Activated naive CD4-positive, alpha-beta T cell treated with anti-CD3 and anti-CD28 coated beads, Interleukin-2, amount 10 ng/mL, durations not matched to agents 7 days and 5 days (primary cell): ENCODE measurements at regions of chr19 and their contacts with region 1.

Region 1: GRCh38 chr19:39970675-39971379 is at the start of gene PSMC4:
- DNase-seq: peak; percentile 99
- H3K4me3 Mint-ChIP-seq: peak within 1 kb of the TSS; percentile 97
- H3K27ac Mint-ChIP-seq: peak within 1 kb of the TSS; percentile 96
- H3K4me1 Mint-ChIP-seq: peaks cover 50% of the 10 kb centered on the region
- H3K27me3 Mint-ChIP-seq: no peaks in the 10 kb centered on the region

Region 2: DNA sequence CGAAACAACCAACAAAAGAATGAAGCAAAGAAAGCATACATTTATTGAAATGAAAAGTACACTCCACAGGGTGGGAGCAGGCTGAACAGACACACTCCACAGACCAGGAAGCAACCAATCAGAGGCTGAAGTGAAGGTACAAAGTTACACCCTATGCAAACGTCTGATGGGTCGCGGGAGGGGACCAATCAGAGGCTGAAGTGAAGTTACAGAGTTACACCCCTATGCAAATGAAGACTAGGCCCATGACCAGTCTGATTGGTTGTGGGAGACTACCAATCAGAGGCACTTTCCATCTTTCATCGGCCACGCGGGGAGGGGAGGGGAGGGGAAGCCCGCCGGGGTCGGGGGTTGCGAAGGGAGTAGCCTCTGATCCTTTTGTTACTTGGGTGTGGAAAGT is 112.3 kb before region 1 on chr19:
- CTCF ChIA-PET with region 1: no interaction called
- DNase-seq: peak; percentile 75
- H3K4me3 Mint-ChIP-seq: peak overlapping the region; percentile 27
- H3K27ac Mint-ChIP-seq: peak overlapping the region; percentile 30
- H3K4me1 Mint-ChIP-seq: peaks cover 3% of the 10 kb centered on the region
- H3K27me3 Mint-ChIP-seq: peaks cover 6% of the 10 kb centered on the region

Region 3: GRCh38 chr19:39870171-39870590 is 100.6 kb before region 1 on chr19:
- CTCF ChIA-PET with region 1: no interaction called
- DNase-seq: no peak
- H3K4me3 Mint-ChIP-seq: no peak overlapping the region
- H3K27ac Mint-ChIP-seq: no peak overlapping the region
- H3K4me1 Mint-ChIP-seq: no peaks in the 10 kb centered on the region
- H3K27me3 Mint-ChIP-seq: no peaks in the 10 kb centered on the region

Region 4: DNA sequence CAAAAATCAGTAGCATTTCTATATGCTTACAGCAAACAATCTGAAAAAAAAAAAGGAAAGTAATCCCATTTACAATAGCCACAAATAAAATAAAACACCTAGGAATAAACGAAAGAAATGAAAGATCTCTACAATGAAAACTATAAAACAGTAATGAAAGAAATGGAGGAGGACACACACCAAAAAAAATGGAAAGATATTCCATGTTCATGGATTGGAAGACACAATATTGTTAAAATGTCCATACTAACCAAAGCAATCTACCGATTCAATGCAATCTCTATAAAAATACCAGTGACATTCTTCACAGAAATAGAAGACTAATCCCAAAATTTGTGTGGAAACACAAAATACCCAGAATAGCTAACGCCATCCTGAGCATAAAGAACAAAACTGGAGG is 41.1 kb before region 1 on chr19:
- CTCF ChIA-PET with region 1: interaction called, 31 read pairs
- DNase-seq: no peak
- H3K4me3 Mint-ChIP-seq: no peak overlapping the region
- H3K27ac Mint-ChIP-seq: no peak overlapping the region
- H3K4me1 Mint-ChIP-seq: peaks cover 7% of the 10 kb centered on the region
- H3K27me3 Mint-ChIP-seq: peaks cover 16% of the 10 kb centered on the region

Region 5: GRCh38 chr19:39941615-39942365 is 29.0 kb before region 1 on chr19:
- CTCF ChIA-PET with region 1: interaction called, 31 read pairs
- DNase-seq: peak; percentile 65
- H3K4me3 Mint-ChIP-seq: peak overlapping the region; percentile 38
- H3K27ac Mint-ChIP-seq: peak overlapping the region; percentile 91
- H3K4me1 Mint-ChIP-seq: peaks cover 70% of the 10 kb centered on the region
- H3K27me3 Mint-ChIP-seq: no peaks in the 10 kb centered on the region

Region 6: GRCh38 chr19:39951686-39952085 is 19.1 kb before region 1 on chr19:
- CTCF ChIA-PET with region 1: interaction called, 28 read pairs
- DNase-seq: no peak
- H3K4me3 Mint-ChIP-seq: no peak overlapping the region
- H3K27ac Mint-ChIP-seq: peak overlapping the region; percentile 99
- H3K4me1 Mint-ChIP-seq: peaks cover 59% of the 10 kb centered on the region
- H3K27me3 Mint-ChIP-seq: no peaks in the 10 kb centered on the region

Region 7: DNA sequence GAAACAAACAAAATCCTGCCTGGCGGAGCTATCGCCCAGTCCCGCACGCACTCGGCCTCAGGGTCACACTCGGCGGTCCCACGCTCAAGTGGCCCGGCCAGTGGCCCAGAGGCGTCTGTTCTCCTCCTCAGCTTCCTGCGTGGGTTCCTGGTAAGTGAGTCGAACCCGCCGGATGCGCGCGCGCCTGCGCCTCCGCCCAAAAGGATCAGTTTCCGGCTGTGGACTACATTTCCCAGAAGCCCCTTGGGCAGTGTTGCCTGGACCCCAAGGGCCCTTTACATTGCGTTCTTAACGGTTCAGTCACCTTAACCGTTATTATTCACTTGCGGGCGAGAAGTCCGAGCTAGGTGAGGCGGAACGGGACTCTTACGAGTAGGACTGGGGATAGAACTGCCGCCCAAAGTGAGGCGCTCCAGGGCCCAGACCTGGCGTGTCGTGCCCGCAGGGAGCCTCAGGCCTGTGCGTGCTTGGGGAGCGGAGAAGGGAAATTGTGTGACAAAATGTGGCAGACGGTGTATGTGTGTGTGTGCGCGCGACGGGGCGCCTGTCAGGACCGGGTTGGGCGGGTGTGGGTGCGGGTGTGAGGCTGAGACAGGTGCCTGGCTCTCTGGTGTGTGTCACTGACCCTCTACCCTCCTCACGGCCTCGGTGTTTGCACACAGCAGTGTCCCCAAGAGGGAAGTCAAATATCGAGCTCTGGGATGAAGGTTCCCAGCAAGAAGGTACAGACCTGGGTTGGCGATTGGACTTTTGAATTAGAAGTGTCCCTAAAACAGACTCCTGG is 26.2 kb after region 1 on chr19 and contains the start of gene ZNF546:
- CTCF ChIA-PET with region 1: interaction called, 10 read pairs
- DNase-seq: peak; percentile 95
- H3K4me3 Mint-ChIP-seq: peak within 1 kb of the TSS; percentile 87
- H3K27ac Mint-ChIP-seq: peak within 1 kb of the TSS; percentile 91
- H3K4me1 Mint-ChIP-seq: peaks cover 33% of the 10 kb centered on the region
- H3K27me3 Mint-ChIP-seq: no peaks in the 10 kb centered on the region

Region 8: DNA sequence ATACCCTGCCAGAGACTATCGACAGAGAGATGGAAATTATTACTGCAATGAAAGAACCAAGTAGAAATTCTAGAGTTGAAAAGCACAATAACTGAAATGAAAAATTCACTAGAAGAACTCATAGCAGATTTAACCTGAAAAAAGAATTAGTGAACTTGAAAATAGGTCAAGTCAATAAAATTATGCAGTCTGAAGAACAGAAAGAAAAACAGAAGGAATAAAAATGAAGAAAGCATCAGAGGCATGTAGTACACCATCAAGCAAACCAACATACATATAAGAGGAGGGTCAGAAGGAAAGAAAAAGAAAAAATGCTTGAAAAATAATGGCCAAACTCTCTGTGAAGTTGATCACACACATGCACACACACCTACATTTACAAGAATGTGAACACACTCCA is 88.8 kb after region 1 on chr19:
- CTCF ChIA-PET with region 1: no interaction called
- DNase-seq: no peak
- H3K4me3 Mint-ChIP-seq: no peak overlapping the region
- H3K27ac Mint-ChIP-seq: no peak overlapping the region
- H3K4me1 Mint-ChIP-seq: peaks cover 27% of the 10 kb centered on the region
- H3K27me3 Mint-ChIP-seq: peaks cover 14% of the 10 kb centered on the region